Aorta (tissue), 5 donors: ENCODE measurements at regions of chr14 and their contacts with region 1.

Region 1: DNA sequence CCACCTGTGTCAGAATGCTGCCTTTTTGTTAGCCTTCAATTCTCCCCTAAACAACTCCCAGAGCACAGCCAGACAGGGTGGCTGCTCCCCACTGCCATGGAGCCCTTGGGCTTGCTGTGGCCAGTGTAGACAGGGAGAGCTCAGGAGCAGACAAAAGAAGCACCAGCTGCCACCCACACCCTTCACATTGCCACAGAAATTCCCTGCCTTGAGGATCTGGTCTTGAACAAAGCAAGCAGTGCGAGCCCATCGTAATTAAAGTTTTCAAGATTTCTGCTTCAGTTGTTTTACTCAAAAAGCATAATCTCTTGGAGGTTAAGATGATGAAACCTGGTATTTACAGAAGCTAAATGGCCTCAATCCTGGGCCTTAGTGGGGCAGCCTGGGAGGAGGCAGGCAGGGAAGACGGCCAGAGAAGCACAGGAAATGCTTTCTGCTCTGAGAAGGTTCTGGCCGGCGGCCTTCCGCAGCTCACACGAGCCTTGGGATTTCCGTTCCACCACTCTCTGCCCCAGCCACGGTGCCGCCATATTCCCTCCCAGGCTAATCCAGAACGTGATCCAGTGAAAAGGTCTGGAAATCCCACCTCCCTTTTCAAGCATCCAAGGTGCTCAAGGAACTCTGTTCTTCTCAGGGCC is 535.2 kb downstream of the BCL11B start:
- DNase-seq: no peak
- ATAC-seq: no peak
- H3K4me3 ChIP-seq: no peak overlapping the region
- H3K27ac ChIP-seq: no peak overlapping the region
- H3K4me1 ChIP-seq: no peaks in the 10 kb centered on the region
- H3K27me3 ChIP-seq: no peaks in the 10 kb centered on the region

Region 2: DNA sequence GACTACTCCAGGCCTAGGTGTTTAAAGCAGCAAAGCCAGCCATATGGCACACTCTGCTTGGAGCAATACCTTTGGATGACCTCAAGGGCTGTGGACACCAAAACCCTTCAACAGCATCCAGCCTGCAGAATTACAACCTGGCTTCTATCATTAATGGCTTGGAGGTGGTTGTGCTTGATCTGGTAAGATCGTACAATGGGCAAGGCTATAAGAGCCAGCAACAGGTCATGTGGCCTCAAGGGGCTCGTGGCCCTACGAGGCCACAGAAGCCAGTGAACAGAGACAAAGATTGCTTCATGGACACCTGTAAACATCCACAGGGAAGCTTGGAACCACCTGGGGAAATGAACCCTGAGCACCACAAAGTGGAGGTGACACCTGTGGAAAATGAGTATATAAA is 122.1 kb before region 1 on chr14:
- intact Hi-C with region 1: loop called in 1 of 2 experiments (anchors 5 kb)
- DNase-seq: no peak
- ATAC-seq: peak; percentile 19
- H3K4me3 ChIP-seq: no peak overlapping the region
- H3K27ac ChIP-seq: no peak overlapping the region
- H3K4me1 ChIP-seq: no peaks in the 10 kb centered on the region
- H3K27me3 ChIP-seq: no peaks in the 10 kb centered on the region

Region 3: GRCh38 chr14:99831903-99832685 is 1095.3 kb after region 1 on chr14:
- intact Hi-C with region 1: no loop called
- DNase-seq: no peak
- ATAC-seq: no peak
- H3K4me3 ChIP-seq: no peak overlapping the region
- H3K27ac ChIP-seq: no peak overlapping the region
- H3K4me1 ChIP-seq: peaks cover 0 to 3% of the 10 kb centered on the region in 2 donors
- H3K27me3 ChIP-seq: no peaks in the 10 kb centered on the region